ENCODE measurements at regions of chr5 and their contacts with region 1.

Region 1: GRCh38 chr5:126422989-126423788 is at the start of gene GRAMD2B:
- DNase-seq: peak; percentile 82
- ATAC-seq: peak; percentile 86
- H3K4me3 Mint-ChIP-seq: peak within 1 kb of the TSS; percentile 87
- H3K27ac Mint-ChIP-seq: peak within 1 kb of the TSS; percentile 90
- H3K4me1 Mint-ChIP-seq: peaks cover 40% of the 10 kb centered on the region
- H3K27me3 Mint-ChIP-seq: no peaks in the 10 kb centered on the region
- total RNA-seq, gene GRAMD2B: 9.7 to 13.9 TPM

Region 2: DNA sequence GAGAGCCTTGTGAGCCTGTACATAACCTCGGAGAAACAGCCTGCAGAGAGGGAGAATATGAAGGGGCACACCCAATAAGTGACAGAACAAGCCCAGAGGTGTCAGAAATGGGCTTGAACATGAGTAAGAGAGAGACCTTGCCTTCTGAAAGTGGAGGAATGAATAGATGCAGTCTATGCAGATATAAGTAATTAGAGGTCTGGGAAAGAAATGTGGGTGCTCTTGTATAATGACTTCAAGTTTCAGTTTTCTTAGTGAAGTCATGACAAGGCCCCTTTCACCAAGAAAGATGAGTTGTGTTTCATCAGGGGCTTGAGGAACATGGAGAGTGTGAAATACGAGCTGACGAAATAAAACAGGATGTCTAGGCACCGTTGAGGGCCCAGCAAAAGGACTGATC is 15.1 kb after region 1 on chr5:
- CTCF ChIA-PET with region 1: interaction called, 6 read pairs
- POLR2A ChIA-PET with region 1: interaction called, 4 read pairs
- intact Hi-C with region 1: loop called (anchors 1 kb)
- DNase-seq: peak; percentile 41
- ATAC-seq: peak; percentile 99
- H3K4me3 Mint-ChIP-seq: peak overlapping the region; percentile 9
- H3K27ac Mint-ChIP-seq: peak overlapping the region; percentile 89
- H3K4me1 Mint-ChIP-seq: peaks cover 34% of the 10 kb centered on the region
- H3K27me3 Mint-ChIP-seq: no peaks in the 10 kb centered on the region

Region 3: GRCh38 chr5:126508962-126509279 is 85.7 kb after region 1 on chr5:
- CTCF ChIA-PET with region 1: interaction called, 3 read pairs
- POLR2A ChIA-PET with region 1: interaction called, 3 read pairs
- intact Hi-C with region 1: loop called in 1 of 2 experiments (anchors 5 kb)
- DNase-seq: no peak
- ATAC-seq: peak; percentile 89
- H3K4me3 Mint-ChIP-seq: peak overlapping the region; percentile 50
- H3K27ac Mint-ChIP-seq: peak overlapping the region; percentile 81
- H3K4me1 Mint-ChIP-seq: peaks cover 37% of the 10 kb centered on the region
- H3K27me3 Mint-ChIP-seq: no peaks in the 10 kb centered on the region

Measured in activated CD4-positive, alpha-beta T cell treated with anti-CD3 and anti-CD28 coated beads for 36 hours (primary cell).